Naive thymus-derived CD8-positive, alpha-beta T cell (primary cell): ENCODE measurements at regions of chr4 and their contacts with region 1.

Region 1: DNA sequence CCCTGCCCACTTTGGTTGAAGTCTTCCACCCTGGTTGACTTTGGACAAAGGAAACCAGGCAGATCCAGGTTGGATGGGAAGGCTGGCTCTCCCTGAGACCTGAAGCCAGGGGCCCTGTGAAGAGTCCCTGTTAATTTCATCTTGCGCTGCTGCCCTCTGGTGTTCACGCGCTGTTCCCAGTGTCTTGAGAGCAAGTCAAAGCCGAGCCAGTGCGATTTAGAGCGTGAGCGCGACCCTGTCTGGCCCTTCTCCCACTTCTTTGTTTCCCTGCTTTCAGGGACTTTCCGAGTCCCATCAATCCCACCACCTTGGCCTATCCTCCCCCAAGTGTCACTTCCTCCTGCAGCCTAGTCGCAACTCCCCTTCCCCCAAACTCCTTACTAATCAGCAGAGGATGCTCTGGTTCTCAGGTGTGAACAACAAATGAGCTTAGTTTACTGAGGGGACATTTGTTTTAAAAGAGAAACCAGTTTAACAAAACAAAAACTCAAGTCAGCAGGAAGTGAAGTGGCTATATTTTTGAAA is 25.8 kb upstream of the CHRNA9 start:
- DNase-seq: peak; percentile 81 to 94 (median 87)
- ATAC-seq: peak; percentile 45 to 62
- H3K4me3 Mint-ChIP-seq: peak overlapping the region; percentile 67 to 90 (median 82)
- H3K27ac Mint-ChIP-seq: peak overlapping the region; percentile 97 to 100 (median 99)
- H3K4me1 Mint-ChIP-seq: peaks cover 51 to 86% (median 81%) of the 10 kb centered on the region in 4 donors
- H3K27me3 Mint-ChIP-seq: no peaks in the 10 kb centered on the region

Region 2: GRCh38 chr4:39786838-39787237 is 522.5 kb before region 1 on chr4:
- POLR2A ChIA-PET with region 1: no interaction called
- DNase-seq: no peak
- ATAC-seq: no peak
- H3K4me3 Mint-ChIP-seq: no peak overlapping the region
- H3K27ac Mint-ChIP-seq: peak overlapping the region in 2 of 10 donors; percentile 5 to 25
- H3K4me1 Mint-ChIP-seq: no peaks in the 10 kb centered on the region
- H3K27me3 Mint-ChIP-seq: no peaks in the 10 kb centered on the region

Region 3: GRCh38 chr4:40056716-40057585 is 252.4 kb before region 1 on chr4 and contains the start of gene N4BP2:
- POLR2A ChIA-PET with region 1: interaction called, 13 read pairs
- DNase-seq: peak; percentile 51 to 85 (median 72)
- ATAC-seq: peak; percentile 65 to 67
- H3K4me3 Mint-ChIP-seq: peak within 1 kb of the TSS; percentile 92 to 100 (median 95)
- H3K27ac Mint-ChIP-seq: peak within 1 kb of the TSS; percentile 80 to 99 (median 97)
- H3K4me1 Mint-ChIP-seq: peaks cover 17 to 36% (median 33%) of the 10 kb centered on the region in 4 donors
- H3K27me3 Mint-ChIP-seq: no peaks in the 10 kb centered on the region
- polyA plus RNA-seq, gene N4BP2: 10.7 to 14.3 (median 13.5) TPM

Region 4: DNA sequence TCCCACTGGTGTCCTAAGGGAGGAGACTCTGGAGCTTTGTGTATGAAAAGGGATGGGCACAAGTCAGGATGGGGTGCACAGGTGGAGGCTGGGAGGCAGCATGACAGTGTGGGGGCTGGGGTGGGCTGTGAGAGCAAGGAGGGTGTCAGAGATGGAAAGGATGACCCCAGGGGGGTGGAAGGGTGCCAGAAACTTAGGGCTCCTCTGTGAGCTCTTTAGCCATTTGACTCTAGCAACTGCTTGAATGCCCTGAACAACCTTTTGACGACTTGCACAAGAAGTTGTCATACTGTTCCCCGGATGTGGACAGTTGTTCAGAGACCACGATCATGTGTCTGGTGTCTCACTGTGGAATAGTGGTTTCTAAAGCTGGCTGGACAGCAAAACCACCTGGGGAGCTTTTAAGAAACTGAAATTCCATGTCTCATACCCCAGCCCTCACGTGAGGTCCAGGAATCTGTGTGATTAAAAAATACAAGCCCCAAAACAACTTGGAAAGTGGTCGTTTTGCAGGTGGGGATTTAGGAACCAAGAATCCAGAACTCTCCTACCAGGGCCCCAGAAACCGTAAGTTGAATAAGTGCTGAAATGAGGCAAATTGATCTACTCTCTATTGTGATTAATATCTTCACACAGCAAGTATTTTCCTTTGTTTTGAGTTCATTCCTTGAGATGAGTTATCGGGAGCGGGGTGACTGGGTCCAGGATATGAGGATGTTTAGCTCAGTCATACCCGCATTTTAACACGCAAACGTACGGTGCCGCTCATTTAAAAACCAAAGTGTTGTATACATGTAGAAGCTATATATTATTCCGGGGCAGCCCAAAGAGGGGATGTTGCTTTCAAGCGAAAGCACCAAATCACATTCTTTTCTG is 109.1 kb before region 1 on chr4:
- POLR2A ChIA-PET with region 1: interaction called, 76 read pairs
- DNase-seq: peak in 8 of 10 donors; percentile 45 to 78 (median 68)
- ATAC-seq: peak; percentile 13 to 18
- H3K4me3 Mint-ChIP-seq: peak overlapping the region; percentile 94 to 100 (median 98)
- H3K27ac Mint-ChIP-seq: peak overlapping the region; percentile 94 to 100 (median 99)
- H3K4me1 Mint-ChIP-seq: peaks cover 34 to 71% (median 56%) of the 10 kb centered on the region in 4 donors
- H3K27me3 Mint-ChIP-seq: no peaks in the 10 kb centered on the region

Region 5: DNA sequence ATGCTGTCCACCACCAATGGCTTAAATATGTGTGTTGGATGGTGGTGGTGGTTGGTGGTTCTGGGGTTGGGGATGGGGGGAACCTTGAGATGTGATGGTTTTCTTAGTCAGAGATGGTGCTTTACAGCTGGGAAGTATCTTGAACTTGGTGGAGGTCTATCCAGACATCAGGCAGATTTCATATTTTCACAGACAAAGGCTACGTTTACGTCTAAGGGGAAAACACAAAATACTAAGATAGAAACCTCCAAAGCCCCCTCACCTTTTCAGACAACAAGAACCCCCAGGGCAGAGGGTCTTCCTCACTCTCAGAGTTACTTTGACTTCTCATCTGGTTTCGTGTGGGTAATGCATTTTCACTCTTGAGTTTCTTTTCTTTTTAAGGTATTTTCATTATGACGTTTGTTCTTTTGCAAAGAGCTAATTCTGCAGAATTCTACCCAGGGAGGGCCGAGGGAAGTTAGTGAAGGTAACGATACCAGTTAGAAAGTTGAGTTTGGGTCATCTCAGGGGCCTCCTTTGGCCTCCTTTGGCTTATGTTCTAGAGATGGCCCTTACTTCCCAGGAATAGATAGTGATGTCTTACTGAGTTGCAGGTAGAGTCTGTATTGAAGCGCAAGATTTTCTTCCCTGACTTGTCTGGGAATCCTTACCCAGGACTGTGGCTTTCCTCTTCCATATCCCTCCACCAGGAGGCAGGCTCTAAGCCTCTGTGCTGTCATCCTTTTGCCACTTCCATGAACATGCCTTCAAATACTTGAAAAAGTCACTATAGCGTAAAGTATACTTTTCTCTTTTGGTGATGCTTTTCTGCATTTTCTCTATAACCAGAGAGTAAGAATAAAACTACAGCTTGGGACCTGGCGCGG is 80.6 kb before region 1 on chr4:
- POLR2A ChIA-PET with region 1: interaction called, 52 read pairs
- DNase-seq: no peak
- ATAC-seq: no peak
- H3K4me3 Mint-ChIP-seq: peak overlapping the region; percentile 62 to 91 (median 82)
- H3K27ac Mint-ChIP-seq: peak overlapping the region; percentile 88 to 99 (median 97)
- H3K4me1 Mint-ChIP-seq: peaks cover 47 to 96% (median 90%) of the 10 kb centered on the region in 4 donors
- H3K27me3 Mint-ChIP-seq: no peaks in the 10 kb centered on the region

Region 6: DNA sequence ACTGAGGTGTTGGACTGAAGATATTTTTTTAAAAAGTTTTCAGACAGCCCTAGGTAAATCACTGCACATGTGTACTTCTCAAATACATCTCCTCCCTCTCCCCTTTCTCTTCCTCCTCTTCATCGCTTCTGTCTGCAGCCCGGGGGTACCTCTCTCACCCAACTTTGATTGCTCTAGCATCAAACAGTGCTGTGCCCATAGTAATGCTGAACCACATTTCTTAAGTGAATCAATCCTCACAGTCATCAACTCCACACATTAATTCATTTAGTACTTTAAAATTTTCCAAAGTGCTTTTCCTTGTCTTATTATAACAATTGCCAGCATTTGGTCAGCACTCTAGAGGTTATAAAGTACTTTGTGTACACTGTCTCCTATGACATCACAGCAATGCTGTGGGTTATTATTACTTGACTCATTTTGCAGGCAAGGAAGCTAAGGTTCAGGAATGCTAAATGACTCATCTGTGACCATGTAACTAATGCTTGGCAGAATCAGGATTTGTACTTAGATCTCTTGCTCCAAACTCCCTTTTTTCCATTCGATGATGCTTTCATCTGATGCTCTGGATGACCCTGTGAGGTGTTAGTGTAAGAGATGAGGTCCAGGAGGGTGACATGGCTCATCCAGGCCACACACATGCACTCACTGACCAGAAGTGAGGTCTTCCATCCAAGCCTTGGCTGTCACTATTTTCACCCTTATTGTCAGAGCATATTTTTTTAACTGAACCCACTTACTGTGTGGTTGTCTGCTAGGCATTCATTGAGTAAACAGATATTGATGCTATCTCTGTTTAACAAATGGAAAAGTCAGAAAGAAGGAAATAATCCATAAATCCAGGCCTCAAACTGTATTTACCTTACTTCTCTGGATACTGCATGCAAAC is 53.7 kb before region 1 on chr4:
- POLR2A ChIA-PET with region 1: interaction called, 15 read pairs
- DNase-seq: no peak
- ATAC-seq: peak; percentile 22 to 27
- H3K4me3 Mint-ChIP-seq: peak overlapping the region; percentile 16 to 78 (median 62)
- H3K27ac Mint-ChIP-seq: peak overlapping the region; percentile 84 to 97 (median 94)
- H3K4me1 Mint-ChIP-seq: peaks cover 39 to 77% (median 70%) of the 10 kb centered on the region in 4 donors
- H3K27me3 Mint-ChIP-seq: no peaks in the 10 kb centered on the region

Region 7: DNA sequence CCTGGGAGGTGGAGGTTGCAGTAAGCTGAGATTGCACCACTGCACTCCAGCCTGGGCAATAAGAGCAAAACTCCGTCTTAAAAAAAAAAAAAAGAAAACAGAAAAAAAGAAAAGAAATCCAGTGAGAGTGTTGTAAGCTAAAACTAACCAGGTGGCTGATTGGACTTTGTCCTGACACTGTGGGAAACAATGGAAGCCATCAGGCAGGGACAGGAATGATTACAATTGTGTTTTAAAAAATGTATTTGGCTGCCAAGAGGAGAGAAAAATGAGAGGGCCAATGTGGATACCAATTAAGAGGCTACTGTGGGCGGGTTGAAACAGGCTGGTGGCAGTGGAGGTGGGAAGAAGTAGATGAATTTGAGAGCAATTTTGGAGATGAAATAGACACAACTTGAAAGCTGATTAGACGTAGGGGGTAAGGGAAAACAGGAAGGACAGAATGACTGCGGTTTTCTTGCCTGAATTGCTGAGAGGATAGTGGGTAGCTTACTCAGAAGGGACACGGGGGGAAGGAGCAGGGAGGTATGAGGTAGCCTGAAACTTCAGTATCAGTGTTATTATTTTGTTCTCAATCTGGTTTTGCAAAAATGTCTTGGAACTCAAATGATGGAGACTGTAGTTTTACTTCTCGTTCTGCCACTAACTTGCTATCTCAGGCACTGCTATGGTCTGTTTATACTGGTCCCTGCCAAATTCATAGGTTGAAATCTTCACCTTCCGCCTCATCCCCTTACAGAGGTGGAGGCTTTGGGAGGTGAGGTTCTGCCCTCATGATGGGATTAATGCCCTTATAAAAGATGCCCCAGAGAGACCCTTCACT is 19.7 kb before region 1 on chr4:
- POLR2A ChIA-PET with region 1: interaction called, 52 read pairs
- DNase-seq: peak in 5 of 10 donors; percentile 24 to 60 (median 58)
- ATAC-seq: peak; percentile 85 to 95
- H3K4me3 Mint-ChIP-seq: peak overlapping the region; percentile 26 to 90 (median 69)
- H3K27ac Mint-ChIP-seq: peak overlapping the region; percentile 82 to 97 (median 94)
- H3K4me1 Mint-ChIP-seq: peaks cover 36 to 85% (median 76%) of the 10 kb centered on the region in 4 donors
- H3K27me3 Mint-ChIP-seq: no peaks in the 10 kb centered on the region